Common myeloid progenitor, CD34-positive (primary cell): ENCODE measurements at regions of chr1 and their contacts with region 1.

Region 1: DNA sequence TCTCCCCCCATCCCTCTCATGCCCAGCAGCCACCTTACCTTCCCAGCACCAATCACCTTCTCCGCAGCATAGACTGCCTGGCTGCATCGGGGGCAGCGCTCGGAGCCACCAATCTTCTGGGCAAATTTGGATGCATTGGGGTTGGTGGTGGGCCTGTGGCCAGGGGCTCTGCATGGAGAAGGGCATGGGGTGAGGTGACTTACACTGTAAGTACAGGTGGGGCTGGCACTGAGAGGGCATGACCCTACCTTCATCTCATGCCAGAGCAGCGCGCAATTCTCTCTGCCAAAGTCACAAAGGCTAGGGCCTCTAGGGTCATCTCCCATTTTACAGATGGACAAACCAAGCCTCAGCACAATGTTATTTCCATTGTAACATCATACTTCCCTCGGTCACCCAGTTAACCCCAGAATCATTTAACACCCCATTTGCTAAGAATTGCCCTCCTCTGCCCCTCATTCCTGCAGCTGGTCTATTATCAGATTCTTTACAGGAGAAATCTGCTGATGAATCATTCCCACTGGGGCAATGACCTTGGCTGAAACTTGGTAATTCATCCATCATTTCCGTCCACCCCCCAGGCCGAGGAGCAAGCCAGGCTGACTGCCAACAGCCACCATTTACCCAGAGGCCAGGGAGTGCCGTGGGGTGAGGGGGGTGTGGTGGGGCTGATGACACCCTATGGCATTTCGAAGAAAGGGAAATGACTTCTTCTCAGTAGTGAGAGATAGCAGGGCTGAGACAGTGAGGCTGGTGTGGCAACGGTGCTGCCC is 17.9 kb downstream of the CSRP1 start:
- DNase-seq: peak in 2 of 3 donors; percentile 38 to 52
- H3K4me3 ChIP-seq: no peak overlapping the region
- H3K27ac ChIP-seq: no peak overlapping the region
- H3K4me1 ChIP-seq: peaks cover 16 to 83% (median 56%) of the 10 kb centered on the region in 4 experiments
- H3K27me3 ChIP-seq: no peaks in the 10 kb centered on the region

Region 2: GRCh38 chr1:201506556-201507359 is 17.8 kb after region 1 on chr1 and contains the start of gene CSRP1:
- CTCF ChIA-PET with region 1: interaction called, 1,059 read pairs
- POLR2A ChIA-PET with region 1: interaction called, 11 read pairs
- DNase-seq: peak; percentile 80 to 91 (median 87)
- H3K4me3 ChIP-seq: peak within 1 kb of the TSS; percentile 67 to 86 (median 76)
- H3K27ac ChIP-seq: peak within 1 kb of the TSS; percentile 54 to 72
- H3K4me1 ChIP-seq: peaks cover 1 to 53% (median 43%) of the 10 kb centered on the region in 4 experiments
- H3K27me3 ChIP-seq: no peaks in the 10 kb centered on the region